ENCODE measurements at regions of chr14 and their contacts with region 1.

Region 1: GRCh38 chr14:96797582-96798349 is 584 bp downstream of the VRK1 start:
- DNase-seq: no peak
- ATAC-seq: peak; percentile 66
- H3K4me3 ChIP-seq: peak overlapping the region; percentile 81
- H3K27ac ChIP-seq: peak overlapping the region; percentile 79
- H3K4me1 ChIP-seq: peaks cover 3% of the 10 kb centered on the region
- H3K27me3 ChIP-seq: no peaks in the 10 kb centered on the region
- CTCF ChIP-seq: no peak

Region 2: GRCh38 chr14:96564389-96564788 is 233.4 kb before region 1 on chr14:
- CTCF ChIA-PET with region 1: no interaction called
- POLR2A ChIA-PET with region 1: no interaction called
- in situ Hi-C with region 1: no loop called
- intact Hi-C with region 1: no loop called
- DNase-seq: no peak
- ATAC-seq: no peak
- H3K4me3 ChIP-seq: no peak overlapping the region
- H3K27ac ChIP-seq: no peak overlapping the region
- H3K4me1 ChIP-seq: no peaks in the 10 kb centered on the region
- H3K27me3 ChIP-seq: no peaks in the 10 kb centered on the region
- CTCF ChIP-seq: no peak

Region 3: DNA sequence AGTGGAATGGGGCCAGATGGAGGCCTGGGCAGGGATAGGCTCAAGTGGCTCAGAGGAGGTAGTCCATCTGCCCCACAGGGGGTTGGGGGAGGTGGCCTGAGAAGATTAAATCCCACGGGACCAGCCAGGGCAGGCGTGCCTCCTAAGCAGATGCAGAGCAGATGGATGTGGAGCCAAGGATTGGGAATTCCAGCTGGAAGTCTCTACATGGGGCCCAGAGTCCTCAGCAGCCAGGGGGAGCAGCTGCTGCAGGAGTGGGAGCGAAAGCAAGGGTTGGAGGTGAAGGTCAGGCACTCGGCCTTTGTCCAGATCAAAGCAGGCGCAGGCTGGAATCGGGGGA is 43.0 kb before region 1 on chr14:
- CTCF ChIA-PET with region 1: no interaction called
- POLR2A ChIA-PET with region 1: interaction called, 12 read pairs
- in situ Hi-C with region 1: no loop called
- intact Hi-C with region 1: no loop called
- DNase-seq: no peak
- ATAC-seq: no peak
- H3K4me3 ChIP-seq: no peak overlapping the region
- H3K27ac ChIP-seq: no peak overlapping the region
- H3K4me1 ChIP-seq: no peaks in the 10 kb centered on the region
- H3K27me3 ChIP-seq: peaks cover 3% of the 10 kb centered on the region
- CTCF ChIP-seq: no peak

Measured in Panc1 (cell line).